Activated T-helper 2 cell treated with anti-CD3 and anti-CD28 coated beads, Interferon-gamma antibody, Interleukin-2, Interleukin-4, amounts not matched to agents 10 μg/mL and 5 μg/mL and 100 μg/mL, durations not matched to agents 14 hours and 24 hours and 36 hours (primary cell): ENCODE measurements at regions of chr2 and their contacts with region 1.

Region 1: DNA sequence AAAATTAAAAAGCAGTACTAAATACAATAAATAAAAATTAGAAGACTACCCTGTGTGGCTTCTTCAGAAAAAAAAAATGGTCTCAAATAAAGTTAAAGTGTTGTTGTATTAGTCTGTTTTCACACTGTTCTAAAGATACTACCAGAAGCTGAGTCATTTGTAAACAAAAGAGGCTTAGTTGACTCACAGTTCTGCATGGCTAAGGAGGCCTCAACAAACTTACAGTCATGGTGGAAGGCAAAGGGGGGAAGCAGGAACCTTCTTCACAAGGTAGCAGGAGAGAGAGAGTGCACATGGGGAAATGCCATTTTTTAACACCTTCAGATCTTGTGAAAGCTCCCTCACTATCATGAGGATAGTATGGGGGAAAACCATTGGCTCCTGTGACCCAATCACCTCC is 612.8 kb downstream of the RNF144A start:
- DNase-seq: no peak
- H3K4me3 Mint-ChIP-seq: no peak overlapping the region
- H3K27ac Mint-ChIP-seq: peak overlapping the region; percentile 57
- H3K4me1 Mint-ChIP-seq: peaks cover 50% of the 10 kb centered on the region
- H3K27me3 Mint-ChIP-seq: no peaks in the 10 kb centered on the region

Region 2: GRCh38 chr2:7552825-7553570 is 23.0 kb after region 1 on chr2:
- intact Hi-C with region 1: loop called (anchors 2 kb)
- DNase-seq: no peak
- H3K4me3 Mint-ChIP-seq: peak overlapping the region; percentile 76
- H3K27ac Mint-ChIP-seq: peak overlapping the region; percentile 90
- H3K4me1 Mint-ChIP-seq: peaks cover 51% of the 10 kb centered on the region
- H3K27me3 Mint-ChIP-seq: no peaks in the 10 kb centered on the region

Region 3: GRCh38 chr2:7639476-7639875 is 109.5 kb after region 1 on chr2:
- intact Hi-C with region 1: no loop called
- DNase-seq: no peak
- H3K4me3 Mint-ChIP-seq: no peak overlapping the region
- H3K27ac Mint-ChIP-seq: no peak overlapping the region
- H3K4me1 Mint-ChIP-seq: no peaks in the 10 kb centered on the region
- H3K27me3 Mint-ChIP-seq: no peaks in the 10 kb centered on the region